BJ (cell line): ENCODE measurements at regions of chr6 and their contacts with region 1.

Region 1: DNA sequence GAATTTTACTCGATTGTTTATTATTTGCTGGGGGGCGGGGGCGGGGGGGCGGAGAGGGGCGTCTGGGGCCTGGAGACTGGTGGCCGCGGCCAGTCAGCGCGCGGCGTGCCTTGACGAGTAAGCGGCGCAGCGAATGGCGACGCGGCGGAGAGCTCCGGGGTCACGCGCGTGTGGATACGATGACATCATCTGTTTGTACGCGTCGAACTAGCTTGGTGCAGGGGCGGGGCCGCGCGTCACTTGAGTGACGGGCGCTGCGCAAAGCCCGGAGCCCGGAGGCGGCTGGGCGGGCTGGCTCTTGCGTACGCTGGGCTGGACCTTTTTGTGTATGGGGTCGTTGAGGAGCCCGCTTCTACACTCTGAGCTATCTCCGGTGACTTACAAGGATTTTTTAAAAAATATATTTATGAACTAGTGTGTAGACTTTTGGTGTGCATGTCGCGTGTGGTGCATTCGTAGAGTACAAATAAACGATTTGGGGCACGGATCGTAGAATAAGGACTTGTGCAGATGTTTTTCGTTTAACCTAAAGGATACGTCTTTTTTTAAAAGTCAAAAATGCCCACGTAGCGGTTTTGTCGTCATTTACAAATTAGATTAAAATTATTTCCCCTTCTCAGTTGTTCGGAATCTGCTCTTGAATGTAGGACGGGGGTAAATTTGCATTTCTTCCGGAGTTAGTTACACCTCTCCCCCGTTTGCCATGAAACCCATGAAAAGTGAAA is 2.2 kb upstream of the FOXO3 start:
- DNase-seq: peak; percentile 87
- H3K4me3 ChIP-seq: peak overlapping the region; percentile 89
- H3K27me3 ChIP-seq: peaks cover 1% of the 10 kb centered on the region; the same call in 1 of the 2 replicates
- CTCF ChIP-seq: no peak

Region 2: GRCh38 chr6:108145639-108146038 is 412.9 kb before region 1 on chr6:
- CTCF ChIA-PET with region 1: no interaction called
- POLR2A ChIA-PET with region 1: no interaction called
- DNase-seq: no peak
- H3K4me3 ChIP-seq: no peak overlapping the region
- H3K27me3 ChIP-seq: peaks cover 5% of the 10 kb centered on the region
- CTCF ChIP-seq: no peak

Region 3: GRCh38 chr6:108594640-108595039 is 36.1 kb after region 1 on chr6:
- CTCF ChIA-PET with region 1: no interaction called
- POLR2A ChIA-PET with region 1: no interaction called
- DNase-seq: no peak
- H3K4me3 ChIP-seq: no peak overlapping the region
- H3K27me3 ChIP-seq: no peaks in the 10 kb centered on the region
- CTCF ChIP-seq: no peak

Region 4: DNA sequence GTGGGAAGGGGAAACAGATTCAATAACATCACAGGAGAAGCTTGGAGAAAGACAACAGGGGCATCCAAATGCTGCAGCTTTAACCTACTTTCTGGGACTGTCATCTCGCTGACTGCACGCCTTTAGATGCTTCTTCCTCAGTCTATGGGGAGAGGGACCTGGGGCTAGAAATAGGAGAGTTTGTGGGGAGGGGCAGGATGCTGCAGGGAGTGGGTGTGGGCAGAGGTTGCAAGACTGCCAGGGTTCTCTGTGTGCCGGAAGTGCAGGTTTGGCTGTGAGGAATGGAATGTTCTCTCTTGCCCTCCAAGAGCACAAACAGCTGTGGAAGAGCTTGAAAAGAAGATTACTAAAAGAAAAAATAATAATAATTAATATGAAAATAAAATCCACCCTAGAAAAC is 95.4 kb after region 1 on chr6:
- CTCF ChIA-PET with region 1: no interaction called
- POLR2A ChIA-PET with region 1: interaction called, 13 read pairs
- DNase-seq: no peak
- H3K4me3 ChIP-seq: no peak overlapping the region
- H3K27me3 ChIP-seq: no peaks in the 10 kb centered on the region
- CTCF ChIP-seq: no peak

Region 5: DNA sequence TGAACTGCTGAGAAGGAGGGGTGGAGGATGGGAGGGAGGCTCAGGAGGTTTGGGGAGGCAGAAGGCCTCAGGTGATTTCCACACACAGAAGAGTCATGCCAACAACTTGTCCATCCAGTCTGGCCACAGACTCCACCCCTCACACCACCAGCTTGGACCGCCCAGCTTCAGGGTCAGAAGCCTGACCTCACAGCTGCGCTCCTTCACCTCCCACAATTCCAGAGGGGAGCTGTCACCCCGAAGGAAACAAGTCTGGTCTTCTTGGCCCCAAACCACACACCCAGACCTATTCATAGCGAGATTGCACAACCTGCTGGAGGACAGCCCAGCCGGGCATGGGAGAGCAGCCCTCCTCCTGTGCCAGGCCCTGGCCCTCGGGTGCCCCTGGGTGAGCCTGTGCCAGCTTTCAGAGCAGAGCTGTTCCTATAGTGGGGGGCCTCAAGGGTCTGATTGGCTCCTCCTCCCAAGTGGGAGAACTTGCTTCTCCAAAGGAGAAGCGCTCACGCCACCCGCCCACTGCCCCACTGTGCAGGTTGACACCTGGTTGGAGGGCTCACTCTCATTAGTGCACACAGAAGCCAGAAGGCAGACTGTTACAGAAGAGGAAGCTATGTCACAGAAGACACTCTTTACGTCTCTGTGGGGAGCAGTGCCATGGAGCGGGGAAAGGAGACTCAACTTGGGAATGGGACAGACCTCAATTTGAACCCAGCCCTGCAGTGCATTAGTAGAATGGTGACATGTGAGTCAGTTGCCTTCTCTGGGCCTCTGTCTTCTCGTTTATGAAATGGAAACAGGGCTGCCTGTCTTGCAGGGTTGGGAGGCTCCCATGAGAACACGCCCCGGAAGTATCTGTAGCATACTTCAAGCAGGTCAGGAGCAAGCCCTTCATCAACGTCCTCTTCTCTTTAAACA is 131.0 kb after region 1 on chr6:
- CTCF ChIA-PET with region 1: no interaction called
- POLR2A ChIA-PET with region 1: no interaction called
- DNase-seq: no peak
- H3K4me3 ChIP-seq: no peak overlapping the region
- H3K27me3 ChIP-seq: no peaks in the 10 kb centered on the region
- CTCF ChIP-seq: no peak